Right lobe of liver (tissue), 6 donors: ENCODE measurements at regions of chr16 and their contacts with region 1.

Region 1: DNA sequence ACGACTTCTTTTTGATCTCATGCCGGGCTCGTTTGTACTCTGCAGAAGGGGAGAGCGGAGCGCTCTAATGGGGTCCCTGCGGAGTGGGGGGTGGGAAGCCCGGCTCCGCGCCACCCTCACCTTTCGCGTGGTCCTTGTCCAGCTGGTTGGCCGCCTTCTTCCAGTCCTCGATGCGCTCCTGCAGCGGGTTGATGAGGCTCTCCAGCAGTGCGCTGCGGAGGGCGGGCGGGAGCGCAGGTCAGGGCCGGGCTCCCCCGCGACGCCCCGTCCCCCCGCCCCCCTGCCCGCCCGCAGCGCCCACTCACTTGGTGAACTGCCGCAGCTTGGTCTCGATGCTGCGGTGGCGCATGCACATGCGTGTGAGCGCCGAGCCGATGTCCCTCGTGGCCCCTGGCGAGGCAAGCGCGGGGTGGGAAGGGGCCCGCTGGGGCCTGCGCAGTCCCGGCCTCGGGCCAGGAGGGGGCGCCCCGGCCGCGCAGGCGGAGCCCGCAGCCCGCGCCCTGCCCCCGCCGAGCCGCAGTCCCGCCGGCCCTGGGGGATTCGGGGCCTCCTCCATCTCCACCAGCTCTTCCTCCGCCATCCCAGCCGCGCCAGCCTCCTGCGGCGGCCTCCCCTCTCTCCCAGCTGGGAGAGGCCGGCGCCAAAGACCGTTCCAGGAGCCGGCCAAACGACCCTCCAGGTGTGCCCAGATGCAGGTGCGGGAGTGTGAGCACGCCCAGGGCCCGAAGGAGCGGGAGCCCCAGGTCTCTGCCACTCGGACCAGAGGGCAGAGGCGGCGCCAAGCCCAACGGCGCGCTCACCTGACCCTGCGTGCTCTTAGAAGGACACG is 6.0 kb downstream of the MTSS2 start:
- DNase-seq: peak in 2 of 3 donors; percentile 23 to 46
- ATAC-seq: no peak
- H3K4me3 ChIP-seq: no peak overlapping the region
- H3K27ac ChIP-seq: no peak overlapping the region
- H3K4me1 ChIP-seq: peaks cover 0 to 40% (median 13%) of the 10 kb centered on the region in 4 donors
- H3K27me3 ChIP-seq: no peaks in the 10 kb centered on the region
- CTCF ChIP-seq: peak; percentile 7 to 44 (median 29)
- POLR2A ChIP-seq: no peak

Region 2: DNA sequence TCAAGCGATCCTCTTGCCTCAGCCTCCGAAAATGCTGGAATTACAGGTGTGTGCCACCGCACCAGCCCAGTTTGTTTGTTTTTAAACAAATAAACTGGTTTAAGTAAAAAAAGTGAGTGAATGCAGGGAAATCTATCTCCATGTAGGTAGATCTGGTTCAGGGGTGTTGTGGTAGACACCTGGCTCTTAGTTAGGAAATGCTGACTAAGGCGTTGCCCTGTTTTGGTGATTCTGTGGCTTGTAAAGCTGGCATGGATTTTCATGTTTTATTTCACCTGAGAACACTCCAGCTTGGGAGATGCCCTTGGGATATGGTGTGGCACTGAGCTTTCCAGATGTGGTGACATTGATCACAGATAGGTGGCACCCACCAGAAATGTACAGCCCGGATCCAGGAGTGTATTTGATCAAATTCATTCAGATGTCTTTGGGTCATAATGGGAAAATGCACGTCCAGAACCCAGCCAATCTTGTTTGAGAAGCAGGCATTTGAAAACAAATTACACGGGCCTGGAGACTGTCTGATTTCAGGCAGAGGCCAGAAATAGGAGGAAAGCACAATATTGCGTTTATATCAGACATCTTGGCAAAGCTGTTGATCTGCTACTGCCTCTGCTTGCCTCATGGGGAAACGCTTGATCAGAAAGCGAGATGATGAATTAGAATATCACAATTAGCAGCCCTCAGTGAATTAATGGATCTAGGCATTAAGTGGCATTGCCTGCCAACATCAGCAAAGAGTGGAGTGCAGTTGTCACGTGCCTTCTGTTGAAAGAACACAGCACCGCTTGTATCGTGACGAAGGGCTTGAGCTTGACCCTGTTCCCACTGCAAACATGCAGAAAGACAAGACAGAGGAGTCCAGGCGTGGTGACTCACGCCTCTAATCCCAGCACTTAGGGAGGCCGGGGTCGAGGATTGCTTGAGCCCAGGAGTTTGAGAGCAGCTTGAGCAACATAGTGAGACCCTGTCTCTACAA is 40.8 kb before region 1 on chr16:
- intact Hi-C with region 1: no loop called
- DNase-seq: no peak
- ATAC-seq: peak in 2 of 4 donors; percentile 21 to 37
- H3K4me3 ChIP-seq: no peak overlapping the region
- H3K27ac ChIP-seq: no peak overlapping the region
- H3K4me1 ChIP-seq: no peaks in the 10 kb centered on the region
- H3K27me3 ChIP-seq: no peaks in the 10 kb centered on the region
- CTCF ChIP-seq: no peak
- POLR2A ChIP-seq: no peak

Region 3: GRCh38 chr16:70737377-70738082 is 57.6 kb after region 1 on chr16:
- intact Hi-C with region 1: loop called (anchors 5 to 10 kb)
- DNase-seq: peak; percentile 74 to 86 (median 86)
- ATAC-seq: peak; percentile 55 to 76 (median 74)
- H3K4me3 ChIP-seq: no peak overlapping the region
- H3K27ac ChIP-seq: peak overlapping the region; percentile 55 to 88 (median 84)
- H3K4me1 ChIP-seq: peaks cover 0 to 53% (median 21%) of the 10 kb centered on the region in 4 donors
- H3K27me3 ChIP-seq: no peaks in the 10 kb centered on the region
- CTCF ChIP-seq: no peak
- POLR2A ChIP-seq: peak; percentile 75

Region 4: DNA sequence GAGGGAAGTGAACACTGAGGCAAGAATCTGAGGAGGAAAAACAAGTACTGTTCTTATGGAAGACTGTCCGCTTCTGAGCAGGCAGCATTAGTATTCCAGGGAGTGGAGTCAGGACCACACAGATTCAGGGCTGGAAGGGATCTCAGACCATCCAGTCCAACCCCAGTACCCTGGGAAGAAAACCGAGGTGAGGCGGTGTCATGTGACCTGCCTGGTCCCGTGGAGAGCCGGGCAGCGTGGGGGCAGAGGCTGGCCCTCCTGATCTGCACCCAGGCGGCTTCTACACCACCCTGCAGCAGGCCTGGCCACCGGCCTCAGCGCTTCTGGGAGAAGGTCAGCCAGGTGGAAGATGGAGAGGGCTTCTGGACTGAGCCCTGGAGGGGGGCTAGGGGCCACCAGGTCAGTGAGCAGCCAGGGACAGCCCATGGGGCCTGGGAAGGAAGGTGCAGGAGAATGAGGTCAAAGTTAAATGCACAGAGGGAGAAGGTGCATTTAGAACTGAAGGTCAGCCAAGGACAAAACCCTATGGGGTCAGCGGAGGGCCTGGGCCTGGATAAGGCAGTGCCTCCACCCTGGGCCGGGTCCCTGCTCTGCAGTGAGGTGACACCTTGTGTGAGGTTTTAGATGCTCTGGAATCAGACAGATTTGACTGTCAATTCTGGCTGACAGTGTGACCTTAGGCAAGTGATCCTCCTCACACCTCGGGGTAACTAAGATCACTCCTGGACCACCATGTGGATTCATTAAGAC is 75.1 kb after region 1 on chr16:
- intact Hi-C with region 1: loop called in 1 of 2 experiments (anchors 5 kb)
- DNase-seq: no peak
- ATAC-seq: no peak
- H3K4me3 ChIP-seq: no peak overlapping the region
- H3K27ac ChIP-seq: no peak overlapping the region
- H3K4me1 ChIP-seq: peaks cover 0 to 40% (median 24%) of the 10 kb centered on the region in 4 donors
- H3K27me3 ChIP-seq: no peaks in the 10 kb centered on the region
- CTCF ChIP-seq: no peak
- POLR2A ChIP-seq: no peak

Region 5: GRCh38 chr16:70767377-70768202 is 87.7 kb after region 1 on chr16:
- intact Hi-C with region 1: loop called in 1 of 2 experiments (anchors 5 kb)
- DNase-seq: no peak
- ATAC-seq: no peak
- H3K4me3 ChIP-seq: no peak overlapping the region
- H3K27ac ChIP-seq: no peak overlapping the region
- H3K4me1 ChIP-seq: peaks cover 0 to 11% (median 4%) of the 10 kb centered on the region in 4 donors
- H3K27me3 ChIP-seq: no peaks in the 10 kb centered on the region
- CTCF ChIP-seq: no peak
- POLR2A ChIP-seq: no peak